Activated naive CD4-positive, alpha-beta T cell treated with anti-CD3 and anti-CD28 coated beads for 36 hours (primary cell): ENCODE measurements at regions of chr17 and their contacts with region 1.

Region 1: DNA sequence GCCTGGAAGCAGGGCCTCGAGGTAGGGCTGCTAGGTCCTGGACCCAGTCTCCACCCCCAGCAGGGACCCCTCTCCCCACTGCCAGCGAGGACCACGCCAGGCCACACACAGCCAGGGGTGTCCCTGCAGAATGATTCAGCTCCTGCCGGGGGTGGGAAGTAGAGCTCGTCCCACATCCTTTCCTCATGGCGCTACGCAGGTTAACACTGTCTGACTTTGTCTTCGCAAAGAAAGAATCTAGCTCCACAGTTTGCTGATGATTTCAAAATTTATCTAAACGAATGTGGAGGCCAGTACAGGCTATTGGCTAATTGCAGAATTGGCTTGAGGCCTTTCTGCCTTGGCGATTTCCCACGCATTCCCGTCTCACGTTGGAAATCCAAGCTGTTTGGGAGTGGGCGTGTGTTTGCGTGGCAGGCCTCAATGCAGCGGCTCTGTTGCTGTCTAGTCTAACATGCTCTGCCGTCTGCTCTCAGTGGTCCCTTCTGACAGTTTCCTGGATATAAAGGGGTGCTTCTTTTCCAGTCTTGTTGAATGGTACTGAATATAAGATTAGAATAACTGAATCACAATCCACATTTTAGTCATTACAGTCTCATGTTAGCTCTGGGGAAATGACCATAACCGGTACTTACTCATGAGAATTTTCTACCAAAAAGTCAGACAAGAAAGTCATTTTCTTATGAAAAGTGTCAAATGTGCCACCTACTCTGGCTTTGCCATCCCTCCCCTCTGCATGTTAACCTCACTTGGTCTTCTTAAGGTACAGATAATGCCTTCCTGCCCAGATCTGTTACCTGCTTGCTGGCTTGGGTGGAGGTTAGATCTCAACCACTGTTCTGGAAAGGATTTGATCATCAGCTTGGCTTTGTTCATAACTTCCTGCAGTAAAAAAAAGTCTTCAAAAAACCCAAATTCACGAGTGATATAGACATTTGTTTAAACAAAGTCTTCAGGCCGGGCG is 252.4 kb downstream of the NTN1 start:
- DNase-seq: peak; percentile 65
- H3K4me3 Mint-ChIP-seq: no peak overlapping the region
- H3K27ac Mint-ChIP-seq: peak overlapping the region; percentile 82
- H3K4me1 Mint-ChIP-seq: peaks cover 24% of the 10 kb centered on the region
- H3K27me3 Mint-ChIP-seq: no peaks in the 10 kb centered on the region

Region 2: DNA sequence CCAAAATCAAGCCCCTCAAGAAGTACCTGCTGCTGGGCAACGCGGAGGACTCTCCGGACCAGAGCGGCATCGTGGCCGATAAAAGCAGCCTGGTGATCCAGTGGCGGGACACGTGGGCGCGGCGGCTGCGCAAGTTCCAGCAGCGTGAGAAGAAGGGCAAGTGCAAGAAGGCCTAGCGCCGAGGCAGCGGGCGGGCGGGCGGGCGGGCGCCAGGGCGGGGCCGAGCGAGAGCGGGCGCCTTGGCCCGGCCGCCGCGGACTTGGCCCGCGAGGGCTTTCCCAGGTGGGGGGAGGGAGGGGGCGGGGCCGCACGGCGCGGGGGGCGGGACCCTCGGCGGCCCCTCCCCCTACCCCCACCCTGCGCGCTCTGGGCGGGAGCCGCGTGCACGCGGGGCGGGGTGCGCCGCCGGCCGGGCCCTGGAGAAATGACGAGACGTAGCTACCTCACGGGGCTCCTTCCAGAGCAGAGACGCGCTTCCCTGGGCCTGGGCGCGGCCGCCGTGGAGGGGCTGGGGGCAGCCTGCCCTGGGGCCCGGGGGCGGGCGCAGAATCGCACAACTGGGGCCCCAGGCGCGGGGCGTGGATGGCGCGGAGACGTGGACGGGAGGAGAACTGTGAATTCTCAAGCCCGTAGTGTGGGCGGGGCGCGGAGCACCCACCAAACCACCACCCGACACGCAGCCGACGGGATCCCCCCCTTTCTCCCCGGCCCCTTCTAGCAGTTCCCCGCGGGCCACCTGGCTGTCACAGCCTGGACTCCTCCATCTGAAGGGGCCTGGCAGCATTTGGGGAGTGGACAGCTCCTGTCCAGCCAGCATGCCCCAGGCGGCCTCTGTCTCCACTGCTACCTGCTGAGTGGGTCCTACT is 33.7 kb before region 1 on chr17:
- CTCF ChIA-PET with region 1: no interaction called
- intact Hi-C with region 1: loop called (anchors 1 kb)
- DNase-seq: peak; percentile 67
- H3K4me3 Mint-ChIP-seq: peak overlapping the region; percentile 74
- H3K27ac Mint-ChIP-seq: no peak overlapping the region
- H3K4me1 Mint-ChIP-seq: peaks cover 10% of the 10 kb centered on the region
- H3K27me3 Mint-ChIP-seq: no peaks in the 10 kb centered on the region

Region 3: GRCh38 chr17:9256751-9257629 is 16.7 kb before region 1 on chr17:
- CTCF ChIA-PET with region 1: interaction called, 4 read pairs
- intact Hi-C with region 1: loop called (anchors 1 kb)
- DNase-seq: no peak
- H3K4me3 Mint-ChIP-seq: no peak overlapping the region
- H3K27ac Mint-ChIP-seq: no peak overlapping the region
- H3K4me1 Mint-ChIP-seq: peaks cover 20% of the 10 kb centered on the region
- H3K27me3 Mint-ChIP-seq: no peaks in the 10 kb centered on the region

Region 4: DNA sequence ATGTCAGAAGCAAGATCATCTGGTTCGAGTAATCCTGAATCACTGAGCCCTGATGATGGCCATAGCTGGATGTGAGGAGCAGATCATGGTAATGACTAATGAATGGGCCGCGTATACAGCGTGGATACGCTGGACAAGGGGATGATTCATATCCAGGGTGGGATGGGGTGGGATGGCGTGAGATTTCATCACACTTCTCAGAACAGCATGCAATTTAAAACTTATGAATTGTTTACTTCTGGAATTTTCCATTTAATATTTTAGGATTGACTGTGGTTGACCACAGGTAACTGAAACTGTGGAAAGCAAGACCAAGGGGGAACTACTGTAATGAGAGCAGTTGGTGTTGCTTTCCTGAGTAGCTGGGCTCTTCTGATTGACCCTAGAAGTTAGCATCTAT is 76.4 kb after region 1 on chr17:
- CTCF ChIA-PET with region 1: no interaction called
- intact Hi-C with region 1: no loop called
- DNase-seq: no peak
- H3K4me3 Mint-ChIP-seq: no peak overlapping the region
- H3K27ac Mint-ChIP-seq: no peak overlapping the region
- H3K4me1 Mint-ChIP-seq: peaks cover 2% of the 10 kb centered on the region
- H3K27me3 Mint-ChIP-seq: no peaks in the 10 kb centered on the region